K562 (cell line): ENCODE measurements at regions of chr2 and their contacts with region 1.

Region 1: GRCh38 chr2:213251618-213252017 is 32.6 kb upstream of the SPAG16 start:
- DNase-seq: peak; percentile 24 to 59 (median 40)
- ATAC-seq: peak; percentile 74
- H3K4me3 ChIP-seq: no peak overlapping the region
- H3K27ac ChIP-seq: no peak overlapping the region
- H3K4me1 ChIP-seq: no peaks in the 10 kb centered on the region; a peak in 1 of 5 replicates
- H3K27me3 ChIP-seq: no peaks in the 10 kb centered on the region
- CTCF ChIP-seq: peak; percentile 4 to 58 (median 37); a peak in 3 of 6 replicates
- EP300 ChIP-seq: no peak
- POLR2A ChIP-seq: no peak
- RAD21 ChIP-seq: peak; percentile 65 to 77

Region 2: DNA sequence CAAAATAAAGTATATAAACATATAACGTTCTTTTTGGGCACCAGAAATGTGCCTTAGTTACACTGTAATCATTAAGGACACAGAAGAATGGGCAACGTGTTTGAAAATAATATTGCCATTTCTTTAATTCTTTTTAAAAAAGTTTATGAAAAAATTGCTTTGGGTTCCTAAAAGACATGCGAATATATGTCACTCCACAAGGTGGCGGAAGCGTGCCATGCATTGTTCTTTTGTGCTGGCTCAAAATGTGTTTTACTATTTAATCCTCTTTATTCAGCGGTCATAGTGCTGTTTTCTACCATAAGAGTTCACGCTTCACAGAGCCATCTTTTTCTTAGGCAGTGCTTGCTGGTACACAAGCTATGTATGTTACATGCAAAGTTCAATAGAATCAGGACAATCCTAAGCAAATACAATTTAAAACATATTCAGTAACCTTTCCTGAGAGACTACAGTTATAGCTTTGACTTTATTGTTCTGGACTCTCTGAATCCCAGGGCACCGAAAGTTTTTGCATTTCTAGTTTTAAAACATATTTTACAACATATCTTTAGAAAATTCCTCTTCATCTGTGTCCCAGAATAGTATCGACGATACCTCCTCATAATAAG is 565.2 kb before region 1 on chr2:
- CTCF ChIA-PET with region 1: interaction called, 3 read pairs
- POLR2A ChIA-PET with region 1: no interaction called
- in situ Hi-C with region 1: no loop called
- intact Hi-C with region 1: loop called (anchors 5 kb)
- DNase-seq: peak; percentile 6 to 45 (median 17)
- ATAC-seq: no peak
- H3K4me3 ChIP-seq: no peak overlapping the region
- H3K27ac ChIP-seq: no peak overlapping the region
- H3K4me1 ChIP-seq: no peaks in the 10 kb centered on the region
- H3K27me3 ChIP-seq: no peaks in the 10 kb centered on the region
- CTCF ChIP-seq: peak; percentile 26 to 70 (median 50); a peak in 5 of 6 replicates
- EP300 ChIP-seq: no peak
- POLR2A ChIP-seq: no peak
- RAD21 ChIP-seq: peak; percentile 62 to 64

Region 3: GRCh38 chr2:212863185-212863588 is 388.4 kb before region 1 on chr2:
- CTCF ChIA-PET with region 1: no interaction called
- POLR2A ChIA-PET with region 1: no interaction called
- in situ Hi-C with region 1: no loop called
- intact Hi-C with region 1: loop called (anchors 10 kb)
- DNase-seq: peak in 3 of 4 experiments; percentile 10 to 23 (median 15)
- ATAC-seq: no peak; the same call in 2 of the 3 replicates
- H3K4me3 ChIP-seq: no peak overlapping the region
- H3K27ac ChIP-seq: no peak overlapping the region
- H3K4me1 ChIP-seq: no peaks in the 10 kb centered on the region
- H3K27me3 ChIP-seq: no peaks in the 10 kb centered on the region
- CTCF ChIP-seq: peak; percentile 26 to 53 (median 26); a peak in 5 of 6 replicates
- EP300 ChIP-seq: no peak
- POLR2A ChIP-seq: no peak
- RAD21 ChIP-seq: peak; percentile 54 to 74